Sigmoid colon (tissue), 7 donors: ENCODE measurements at regions of chr14 and their contacts with region 1.

Region 1: GRCh38 chr14:20682435-20683124 is 1.8 kb upstream of the RNASE4 start:
- DNase-seq: peak; percentile 96
- H3K4me3 ChIP-seq: peak overlapping the region; percentile 77 to 93 (median 80)
- H3K27ac ChIP-seq: peak overlapping the region; percentile 99 to 100 (median 99)
- H3K4me1 ChIP-seq: peaks cover 4 to 41% (median 32%) of the 10 kb centered on the region in 4 donors
- H3K27me3 ChIP-seq: no peaks in the 10 kb centered on the region
- CTCF ChIP-seq: no peak
- EP300 ChIP-seq: no peak
- POLR2A ChIP-seq: peak; percentile 95

Region 2: DNA sequence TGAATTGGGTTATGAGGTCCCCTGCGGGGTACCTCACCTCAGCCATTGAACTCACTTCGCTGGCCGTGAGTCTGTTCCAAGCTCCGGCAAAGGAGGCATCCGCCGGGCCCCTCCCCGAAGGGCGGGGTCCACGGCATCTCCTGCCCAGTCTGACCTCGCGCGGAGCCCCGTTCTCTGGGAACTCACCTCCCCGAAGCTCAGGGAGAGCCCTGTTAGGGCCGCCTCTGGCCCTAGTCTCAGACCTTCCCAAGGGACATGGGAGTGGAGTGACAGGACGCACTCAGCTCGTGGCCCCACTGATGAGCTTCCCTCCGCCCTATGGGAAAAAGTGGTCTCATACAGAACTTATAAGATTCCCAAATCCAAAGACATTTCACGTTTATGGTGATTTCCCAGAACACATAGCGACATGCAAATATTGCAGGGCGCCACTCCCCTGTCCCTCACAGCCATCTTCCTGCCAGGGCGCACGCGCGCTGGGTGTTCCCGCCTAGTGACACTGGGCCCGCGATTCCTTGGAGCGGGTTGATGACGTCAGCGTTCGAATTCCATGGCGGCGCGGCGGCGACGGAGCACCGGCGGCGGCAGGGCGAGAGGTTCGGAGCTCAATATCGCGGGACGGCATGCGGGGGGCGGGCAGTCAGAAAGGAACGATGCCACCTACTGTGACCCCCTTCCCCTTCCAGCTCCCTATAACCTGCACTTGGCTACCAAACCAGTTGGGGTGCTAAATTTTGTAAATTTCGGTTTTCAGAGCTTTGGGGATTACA is 339.3 kb before region 1 on chr14 and contains the start of gene PARP2:
- intact Hi-C with region 1: loop called (anchors 5 kb)
- DNase-seq: peak; percentile 99
- H3K4me3 ChIP-seq: peak within 1 kb of the TSS; percentile 63 to 88 (median 72)
- H3K27ac ChIP-seq: peak within 1 kb of the TSS; percentile 92 to 95 (median 94)
- H3K4me1 ChIP-seq: peaks cover 0 to 11% (median 8%) of the 10 kb centered on the region in 4 donors
- H3K27me3 ChIP-seq: no peaks in the 10 kb centered on the region
- CTCF ChIP-seq: peak in 1 of 4 experiments; percentile 4
- EP300 ChIP-seq: peak in 1 of 4 donors; percentile 64
- POLR2A ChIP-seq: peak; percentile 65 to 77
- total RNA-seq, gene PARP2: 7.4 to 14.3 (median 10.6) TPM

Region 3: DNA sequence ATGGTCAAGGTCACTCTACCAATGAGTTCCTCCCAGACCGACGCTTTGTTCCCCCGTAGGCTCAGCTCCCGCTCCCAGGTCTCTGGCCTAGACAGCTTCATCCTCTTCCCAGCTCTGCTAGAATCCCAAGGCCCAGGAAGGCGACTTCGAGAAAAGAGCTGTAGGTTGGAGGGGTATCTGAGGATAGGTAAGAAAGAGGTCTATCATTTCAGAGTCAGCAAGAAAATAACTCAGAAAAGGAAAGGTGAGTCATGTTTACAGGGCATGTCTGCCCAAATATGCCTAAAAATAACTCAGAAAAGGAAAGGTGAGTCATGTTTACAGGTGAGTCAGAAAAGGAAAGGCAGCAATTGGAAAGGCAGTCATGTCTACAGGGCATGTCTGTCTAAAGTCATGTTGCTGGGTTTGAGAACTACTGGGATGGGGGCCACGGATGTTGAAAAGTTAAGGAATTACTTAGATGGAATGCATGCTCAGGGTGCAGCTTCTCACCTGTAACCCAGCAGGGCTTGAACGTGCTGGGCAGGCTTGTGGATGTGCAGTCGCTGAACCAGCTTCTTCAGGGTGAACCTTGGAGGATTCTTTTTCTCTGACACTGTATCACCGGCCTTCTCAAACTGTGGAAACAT is 281.5 kb before region 1 on chr14:
- intact Hi-C with region 1: no loop called
- DNase-seq: no peak
- H3K4me3 ChIP-seq: no peak overlapping the region
- H3K27ac ChIP-seq: no peak overlapping the region
- H3K4me1 ChIP-seq: no peaks in the 10 kb centered on the region
- H3K27me3 ChIP-seq: no peaks in the 10 kb centered on the region
- CTCF ChIP-seq: no peak
- EP300 ChIP-seq: no peak
- POLR2A ChIP-seq: no peak

Region 4: GRCh38 chr14:20461274-20462001 is 221.1 kb before region 1 on chr14 and contains the start of gene PIP4P1:
- intact Hi-C with region 1: loop called (anchors 2 kb)
- DNase-seq: peak; percentile 100
- H3K4me3 ChIP-seq: peak within 1 kb of the TSS; percentile 91 to 99 (median 96)
- H3K27ac ChIP-seq: peak within 1 kb of the TSS; percentile 97 to 99 (median 99)
- H3K4me1 ChIP-seq: peaks cover 0 to 26% (median 16%) of the 10 kb centered on the region in 4 donors
- H3K27me3 ChIP-seq: no peaks in the 10 kb centered on the region
- CTCF ChIP-seq: no peak
- EP300 ChIP-seq: peak in 2 of 4 donors; percentile 76 to 94
- POLR2A ChIP-seq: peak; percentile 37 to 71
- total RNA-seq, gene PIP4P1: 18.9 to 28.0 (median 22.8) TPM

Region 5: GRCh38 chr14:20970983-20971704 is 288.6 kb after region 1 on chr14:
- intact Hi-C with region 1: loop called (anchors 5 kb)
- DNase-seq: peak; percentile 92
- H3K4me3 ChIP-seq: peak overlapping the region; percentile 32 to 62 (median 60)
- H3K27ac ChIP-seq: peak overlapping the region; percentile 79 to 88 (median 80)
- H3K4me1 ChIP-seq: peaks cover 0 to 11% (median 10%) of the 10 kb centered on the region in 4 donors
- H3K27me3 ChIP-seq: no peaks in the 10 kb centered on the region
- CTCF ChIP-seq: peak; percentile 72 to 89 (median 82)
- EP300 ChIP-seq: no peak
- POLR2A ChIP-seq: no peak

Region 6: DNA sequence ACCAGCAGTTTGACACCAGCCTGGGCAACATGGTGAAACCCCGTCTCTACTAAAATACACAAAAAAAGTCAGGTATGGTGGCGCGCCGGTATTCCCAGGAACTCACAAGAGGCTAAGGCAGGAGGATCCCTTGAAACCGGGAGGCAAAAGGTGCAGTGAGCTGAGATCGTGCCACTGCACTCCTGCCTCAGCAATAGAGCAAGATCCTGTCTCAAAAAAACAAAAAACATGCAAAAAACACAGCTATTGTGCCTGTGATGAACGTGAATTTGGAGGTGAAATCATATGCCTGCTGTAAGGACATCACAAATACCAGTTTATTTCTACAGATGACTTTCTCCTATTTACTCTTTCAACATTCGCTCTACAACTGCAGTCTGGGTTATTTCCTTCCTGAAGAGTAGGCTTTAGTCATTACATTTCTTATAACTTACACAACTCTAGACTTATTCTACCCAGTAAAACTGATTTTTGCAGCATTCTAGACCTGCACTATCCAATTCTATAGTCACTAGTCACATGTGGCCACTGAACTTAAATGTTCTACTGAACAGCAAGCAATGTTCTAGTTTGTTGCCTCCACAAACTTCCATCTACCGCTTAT is 538.4 kb after region 1 on chr14:
- intact Hi-C with region 1: no loop called
- DNase-seq: no peak
- H3K4me3 ChIP-seq: no peak overlapping the region
- H3K27ac ChIP-seq: no peak overlapping the region
- H3K4me1 ChIP-seq: peaks cover 0 to 50% (median 34%) of the 10 kb centered on the region in 4 donors
- H3K27me3 ChIP-seq: no peaks in the 10 kb centered on the region
- CTCF ChIP-seq: no peak
- EP300 ChIP-seq: no peak
- POLR2A ChIP-seq: no peak

Region 7: GRCh38 chr14:21476925-21477681 is 794.5 kb after region 1 on chr14 and contains the starts of genes RAB2B and TOX4:
- intact Hi-C with region 1: loop called (anchors 10 kb)
- DNase-seq: peak; percentile 98
- H3K4me3 ChIP-seq: peak within 1 kb of the TSS; percentile 68 to 86 (median 72)
- H3K27ac ChIP-seq: peak within 1 kb of the TSS; percentile 84 to 90 (median 86)
- H3K4me1 ChIP-seq: peaks cover 0 to 27% (median 23%) of the 10 kb centered on the region in 4 donors
- H3K27me3 ChIP-seq: no peaks in the 10 kb centered on the region
- CTCF ChIP-seq: peak; percentile 96 to 100 (median 100)
- EP300 ChIP-seq: no peak
- POLR2A ChIP-seq: peak; percentile 82 to 85
- total RNA-seq, gene RAB2B: 22.7 to 28.5 (median 26.9) TPM
- total RNA-seq, gene TOX4: 40.0 to 71.8 (median 48.5) TPM